ENCODE measurements at regions of chr11 and their contacts with region 1.

Region 1: DNA sequence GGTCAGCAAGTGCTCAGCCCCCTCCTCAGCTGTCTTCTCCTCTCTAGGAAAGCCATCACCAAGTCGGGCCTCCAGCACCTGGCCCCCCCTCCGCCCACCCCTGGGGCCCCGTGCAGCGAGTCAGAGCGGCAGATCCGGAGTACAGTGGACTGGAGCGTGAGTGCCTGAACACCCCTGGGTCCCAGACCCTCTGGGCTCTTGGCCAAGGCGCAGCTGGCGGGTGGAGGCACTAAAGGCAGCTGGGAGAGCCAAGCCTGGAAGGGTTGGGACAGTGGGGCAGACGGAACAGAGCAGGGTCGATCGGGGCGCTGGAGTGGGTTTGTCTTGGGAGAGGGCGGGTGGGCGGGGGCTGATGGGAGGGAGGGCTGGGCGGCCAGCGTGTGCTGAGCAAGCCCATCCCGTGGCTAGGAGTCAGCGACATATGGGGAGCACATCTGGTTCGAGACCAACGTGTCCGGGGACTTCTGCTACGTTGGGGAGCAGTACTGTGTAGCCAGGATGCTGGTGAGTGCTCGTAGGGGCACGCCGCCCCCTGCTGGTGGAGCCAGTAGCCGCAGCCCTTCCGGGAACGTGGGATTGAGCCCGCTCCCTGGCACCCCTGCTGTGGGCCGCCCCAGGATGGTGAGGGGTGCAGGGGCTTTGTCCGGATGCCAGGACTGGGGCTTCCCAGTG is 14.1 kb upstream of the MDK start:
- DNase-seq: peak; percentile 71 to 81
- ATAC-seq: peak; percentile 34 to 67 (median 56)
- H3K4me3 ChIP-seq: no peak overlapping the region
- H3K27ac ChIP-seq: peak overlapping the region in 7 of 10 donors; percentile 17 to 56 (median 38)
- H3K4me1 ChIP-seq: peaks cover 14 to 57% (median 44%) of the 10 kb centered on the region in 9 donors
- H3K27me3 ChIP-seq: no peaks in the 10 kb centered on the region
- CTCF ChIP-seq: peak; percentile 84 to 95 (median 92)

Region 2: DNA sequence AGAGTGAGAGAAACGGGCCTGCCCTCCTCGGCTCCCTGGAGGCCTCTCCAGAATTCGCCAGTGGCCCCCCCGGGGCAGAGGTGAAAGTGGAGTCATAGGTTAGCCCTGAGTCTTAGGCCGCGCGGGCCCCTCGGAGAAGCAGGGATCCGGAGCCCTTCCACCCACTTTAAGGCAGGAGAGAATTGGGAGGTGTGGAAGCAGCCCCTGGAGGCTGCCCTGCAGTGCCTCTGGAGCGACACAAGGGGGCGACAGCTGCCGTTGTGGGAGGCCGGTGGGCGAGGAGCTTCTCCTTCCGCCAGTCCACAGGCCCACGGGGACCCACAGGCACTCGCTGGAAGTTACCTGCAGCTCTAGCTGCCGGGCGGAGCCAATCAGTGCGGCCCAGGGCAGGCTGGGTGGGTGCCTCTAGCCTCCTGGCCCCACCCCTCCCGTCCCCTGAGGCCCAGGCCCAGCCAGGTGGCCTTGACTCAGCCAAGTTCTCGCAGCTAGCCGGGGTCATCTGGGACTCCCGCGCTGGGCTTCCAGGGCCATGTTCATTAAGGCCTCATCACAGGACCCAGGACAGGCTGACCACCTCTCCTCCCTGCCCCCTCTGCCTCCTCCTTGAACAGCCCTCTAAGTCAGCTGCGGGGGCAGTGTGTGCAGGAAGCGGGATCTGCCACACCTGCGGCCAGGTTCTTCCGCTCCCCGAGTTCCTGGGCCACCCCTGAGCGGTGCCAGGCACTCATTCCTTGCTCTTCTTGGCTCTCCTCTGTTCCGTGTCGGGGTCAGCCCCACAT is 15.1 kb before region 1 on chr11:
- intact Hi-C with region 1: loop called in 2 of 10 experiments (anchors 2 kb)
- DNase-seq: peak in 1 of 2 donors; percentile 66
- ATAC-seq: peak; percentile 16 to 54 (median 44)
- H3K4me3 ChIP-seq: peak overlapping the region in 6 of 10 donors; percentile 23 to 33 (median 26)
- H3K27ac ChIP-seq: peak overlapping the region in 9 of 10 donors; percentile 35 to 91 (median 74)
- H3K4me1 ChIP-seq: peaks cover 22 to 83% (median 63%) of the 10 kb centered on the region in 9 donors
- H3K27me3 ChIP-seq: no peaks in the 10 kb centered on the region
- CTCF ChIP-seq: peak; percentile 70 to 98 (median 95)